ENCODE measurements at regions of chrX and their contacts with region 1.

Region 1: DNA sequence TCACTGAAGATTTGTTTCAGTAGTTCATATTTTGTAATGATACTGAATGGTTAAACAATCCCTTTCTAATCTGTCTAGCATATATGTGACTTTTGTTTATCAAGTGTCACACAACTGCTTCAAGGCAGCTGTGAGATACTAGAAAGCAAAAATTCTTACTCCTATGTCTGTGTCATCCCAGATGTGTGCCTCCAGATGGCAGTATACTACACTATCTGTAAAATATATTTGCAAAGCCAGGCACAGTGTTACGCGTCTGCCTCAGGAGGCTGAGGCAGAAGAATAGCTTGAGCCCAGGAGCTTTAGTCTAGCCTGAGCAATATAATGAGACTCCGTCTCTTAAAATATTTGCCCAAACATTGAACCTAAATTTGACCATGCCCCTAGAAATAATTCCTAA is 4.0 kb downstream of the NUDT10 start:
- DNase-seq: no peak
- H3K4me3 Mint-ChIP-seq: no peak overlapping the region
- H3K27ac Mint-ChIP-seq: no peak overlapping the region
- H3K4me1 Mint-ChIP-seq: peaks cover 5% of the 10 kb centered on the region
- H3K27me3 Mint-ChIP-seq: peaks cover 7% of the 10 kb centered on the region

Region 2: GRCh38 chrX:51395810-51396728 is 59.5 kb after region 1 on chrX:
- intact Hi-C with region 1: loop called (anchors 1 kb)
- DNase-seq: peak; percentile 17
- H3K4me3 Mint-ChIP-seq: peak overlapping the region; percentile 83
- H3K27ac Mint-ChIP-seq: peak overlapping the region; percentile 81
- H3K4me1 Mint-ChIP-seq: peaks cover 5% of the 10 kb centered on the region
- H3K27me3 Mint-ChIP-seq: no peaks in the 10 kb centered on the region

Region 3: GRCh38 chrX:51420610-51421009 is 84.0 kb after region 1 on chrX:
- intact Hi-C with region 1: loop called (anchors 1 kb)
- DNase-seq: peak; percentile 5
- H3K4me3 Mint-ChIP-seq: no peak overlapping the region
- H3K27ac Mint-ChIP-seq: no peak overlapping the region
- H3K4me1 Mint-ChIP-seq: no peaks in the 10 kb centered on the region
- H3K27me3 Mint-ChIP-seq: no peaks in the 10 kb centered on the region

Region 4: GRCh38 chrX:51461053-51462044 is 124.8 kb after region 1 on chrX:
- intact Hi-C with region 1: loop called (anchors 1 kb)
- DNase-seq: no peak
- H3K4me3 Mint-ChIP-seq: no peak overlapping the region
- H3K27ac Mint-ChIP-seq: no peak overlapping the region
- H3K4me1 Mint-ChIP-seq: no peaks in the 10 kb centered on the region
- H3K27me3 Mint-ChIP-seq: no peaks in the 10 kb centered on the region

Region 5: DNA sequence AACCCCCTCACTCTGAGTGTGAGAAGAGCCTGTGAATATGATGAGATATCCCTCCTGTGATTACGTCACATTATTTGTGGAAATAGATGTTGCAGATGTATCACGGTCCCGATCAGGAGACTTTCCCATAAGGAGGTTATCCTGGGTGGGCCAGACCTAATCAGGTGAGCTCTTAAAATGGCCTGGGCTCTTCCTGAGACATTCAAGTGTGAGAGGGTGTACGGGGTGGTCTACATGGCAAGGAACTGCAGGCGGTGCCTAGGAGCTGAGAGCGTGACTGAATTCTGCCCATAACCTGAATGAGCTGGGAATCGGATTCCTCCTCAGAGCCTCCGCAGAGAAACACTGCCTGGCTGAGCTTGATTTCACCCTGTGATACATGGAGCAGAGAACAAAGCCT is 360.8 kb after region 1 on chrX:
- intact Hi-C with region 1: no loop called
- DNase-seq: no peak
- H3K4me3 Mint-ChIP-seq: no peak overlapping the region
- H3K27ac Mint-ChIP-seq: no peak overlapping the region
- H3K4me1 Mint-ChIP-seq: no peaks in the 10 kb centered on the region
- H3K27me3 Mint-ChIP-seq: no peaks in the 10 kb centered on the region